ENCODE measurements at regions of chr9 and their contacts with region 1.

Region 1: DNA sequence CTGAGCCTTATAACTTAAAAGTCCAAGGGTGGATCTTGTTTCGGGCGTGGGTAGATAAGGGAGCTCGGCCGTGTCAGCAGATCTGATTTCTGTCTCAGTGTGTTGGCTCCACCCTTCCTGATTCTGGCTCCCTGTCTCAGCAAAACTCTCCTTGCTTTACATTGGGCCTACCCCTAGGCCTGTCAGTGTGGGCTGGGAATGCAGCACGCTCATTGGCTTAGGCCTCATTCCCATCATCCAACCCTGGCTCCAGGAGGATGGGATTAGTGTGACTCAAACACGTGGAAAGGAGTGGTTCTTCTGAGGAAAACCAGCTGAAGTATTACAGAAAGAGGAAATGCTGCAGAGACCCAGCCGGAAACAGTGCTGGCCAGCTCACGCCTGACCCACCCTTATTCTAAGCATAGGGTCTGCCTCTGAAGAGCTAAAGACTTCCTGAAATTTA is 59.9 kb downstream of the ZFAND5 start:
- DNase-seq: peak; percentile 69 to 92 (median 71)
- ATAC-seq: peak; percentile 99 to 100
- H3K4me3 ChIP-seq: peak overlapping the region; percentile 77
- H3K27ac ChIP-seq: peak overlapping the region; percentile 95
- H3K4me1 ChIP-seq: peaks cover 5% of the 10 kb centered on the region
- H3K27me3 ChIP-seq: no peaks in the 10 kb centered on the region

Region 2: DNA sequence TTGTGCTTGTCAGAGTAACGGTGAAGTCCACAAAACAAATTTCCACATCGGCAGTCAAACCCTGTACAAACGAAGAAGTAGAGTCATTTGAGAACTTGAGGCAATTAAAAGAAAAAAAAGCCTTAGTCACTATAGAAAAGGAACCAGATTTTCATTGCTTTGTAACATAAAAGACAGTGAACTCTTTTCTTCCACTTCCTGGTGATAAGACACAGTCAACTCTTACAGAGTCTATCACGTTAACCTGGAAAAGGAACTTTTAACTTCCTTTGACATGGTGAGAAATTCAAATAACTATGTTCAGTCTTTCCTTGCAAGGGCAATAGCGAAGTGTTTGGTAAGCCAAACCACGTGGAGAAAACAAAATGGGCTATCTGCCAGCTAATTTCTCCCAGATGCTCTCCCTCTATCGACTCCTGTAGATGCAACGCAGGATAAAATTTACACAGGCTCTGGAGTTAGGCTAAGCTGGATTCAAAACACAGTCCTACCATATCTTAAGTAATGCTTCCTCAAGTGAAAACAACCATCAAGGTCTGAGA is 51.0 kb after region 1 on chr9:
- intact Hi-C with region 1: loop called in 1 of 4 experiments (anchors 10 kb)
- DNase-seq: no peak
- ATAC-seq: peak; percentile 14 to 21
- H3K4me3 ChIP-seq: no peak overlapping the region
- H3K27ac ChIP-seq: peak overlapping the region; percentile 71
- H3K4me1 ChIP-seq: peaks cover 3% of the 10 kb centered on the region
- H3K27me3 ChIP-seq: no peaks in the 10 kb centered on the region

Region 3: DNA sequence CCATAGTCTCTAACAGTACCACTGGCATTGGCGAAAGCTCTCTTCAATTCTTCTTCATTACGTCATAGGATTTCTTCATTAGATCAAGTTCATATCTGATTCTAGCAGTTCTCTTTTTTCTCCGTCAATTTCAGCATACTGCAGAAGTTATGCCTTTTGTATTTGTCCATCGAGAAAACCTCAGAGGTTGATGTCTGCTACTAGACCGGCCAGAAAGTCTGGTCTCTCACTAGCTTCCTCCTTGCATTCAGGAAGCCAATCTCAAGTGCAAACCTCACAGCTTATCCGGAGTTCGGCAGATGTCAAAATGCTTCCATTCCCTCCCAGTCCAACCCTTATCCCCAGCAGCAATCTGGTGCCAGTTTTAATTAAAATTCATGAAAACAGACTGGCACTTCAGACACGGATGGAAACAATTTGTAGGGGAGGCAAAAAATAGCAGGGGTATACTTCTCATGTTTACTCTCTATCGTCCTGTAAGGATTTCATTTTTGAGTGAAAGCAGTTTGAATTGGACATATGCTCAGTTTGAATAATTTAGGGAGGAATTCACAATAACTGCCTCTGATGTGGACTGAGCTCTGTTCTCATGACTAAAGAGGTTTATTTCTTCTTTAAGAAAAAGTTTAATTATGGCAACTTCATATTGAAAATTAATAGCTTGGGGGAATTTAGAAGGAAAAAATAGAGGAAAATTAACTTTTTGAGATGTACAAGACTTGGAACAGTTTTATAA is 159.9 kb after region 1 on chr9:
- intact Hi-C with region 1: loop called in 1 of 4 experiments (anchors 10 kb)
- DNase-seq: no peak
- ATAC-seq: peak; percentile 45 to 80
- H3K4me3 ChIP-seq: peak overlapping the region; percentile 13
- H3K27ac ChIP-seq: no peak overlapping the region
- H3K4me1 ChIP-seq: no peaks in the 10 kb centered on the region
- H3K27me3 ChIP-seq: no peaks in the 10 kb centered on the region

Measured in right cardiac atrium (tissue), 5 donors.